ENCODE measurements at regions of chr4 and their contacts with region 1.

Region 1: GRCh38 chr4:39697740-39698423 is at the start of gene UBE2K:
- DNase-seq: peak; percentile 91 to 95
- ATAC-seq: peak; percentile 94 to 98 (median 96)
- H3K4me3 ChIP-seq: peak within 1 kb of the TSS; percentile 85
- H3K27ac ChIP-seq: peak within 1 kb of the TSS; percentile 90
- H3K4me1 ChIP-seq: peaks cover 23% of the 10 kb centered on the region
- H3K27me3 ChIP-seq: no peaks in the 10 kb centered on the region
- CTCF ChIP-seq: no peak
- total RNA-seq, gene UBE2K: 45.9 to 75.9 (median 61.5) TPM

Region 2: DNA sequence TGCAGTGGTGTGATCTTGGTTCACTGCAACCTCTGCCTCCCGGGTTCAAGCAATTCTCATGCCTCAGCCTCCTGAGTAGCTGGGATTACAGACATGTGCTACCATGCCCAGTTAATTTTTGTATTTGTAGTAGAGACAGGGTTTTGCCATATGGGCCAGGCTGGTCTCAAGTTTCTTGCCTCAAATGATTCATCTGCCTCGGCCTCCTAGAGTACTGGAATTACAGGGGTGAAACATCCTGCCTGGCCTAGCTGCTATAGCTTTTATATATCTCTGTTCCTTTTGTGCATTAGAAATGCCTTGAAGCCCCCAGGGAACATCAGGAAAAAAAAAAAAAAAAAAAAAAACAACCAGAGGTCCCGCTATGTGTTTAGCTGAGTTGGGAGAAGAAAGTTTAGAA is 34.8 kb after region 1 on chr4:
- intact Hi-C with region 1: loop called in 1 of 2 experiments (anchors 5 kb)
- DNase-seq: no peak
- ATAC-seq: peak; percentile 89 to 96 (median 96)
- H3K4me3 ChIP-seq: no peak overlapping the region
- H3K27ac ChIP-seq: peak overlapping the region; percentile 54
- H3K4me1 ChIP-seq: peaks cover 21% of the 10 kb centered on the region
- H3K27me3 ChIP-seq: no peaks in the 10 kb centered on the region
- CTCF ChIP-seq: no peak

Region 3: DNA sequence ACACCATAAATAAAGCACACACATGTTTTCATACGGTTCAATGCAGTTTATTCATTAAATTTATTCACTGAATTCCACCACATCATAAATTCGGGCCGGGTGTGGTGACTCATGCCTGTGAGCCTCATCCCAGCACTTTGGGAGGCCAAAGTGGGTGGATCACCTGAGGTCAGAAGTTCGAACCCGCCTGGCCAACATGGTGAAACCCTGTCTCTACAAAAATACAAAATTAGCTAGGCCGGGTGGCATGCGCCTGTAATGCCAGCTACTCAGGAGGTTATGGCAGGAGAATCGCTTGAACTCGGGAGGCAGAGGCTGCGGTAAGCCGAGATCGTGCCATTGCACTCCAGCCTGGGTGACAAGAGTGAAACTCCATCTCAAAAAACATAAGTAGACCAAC is 148.2 kb after region 1 on chr4:
- intact Hi-C with region 1: loop called (anchors 10 kb)
- DNase-seq: peak in 1 of 2 donors; percentile 58
- ATAC-seq: peak; percentile 59 to 93 (median 84)
- H3K4me3 ChIP-seq: no peak overlapping the region
- H3K27ac ChIP-seq: no peak overlapping the region
- H3K4me1 ChIP-seq: peaks cover 3% of the 10 kb centered on the region
- H3K27me3 ChIP-seq: no peaks in the 10 kb centered on the region
- CTCF ChIP-seq: no peak

Region 4: GRCh38 chr4:39855909-39856512 is 158.1 kb after region 1 on chr4:
- intact Hi-C with region 1: loop called in 1 of 2 experiments (anchors 10 kb)
- DNase-seq: no peak
- ATAC-seq: no peak
- H3K4me3 ChIP-seq: no peak overlapping the region
- H3K27ac ChIP-seq: no peak overlapping the region
- H3K4me1 ChIP-seq: no peaks in the 10 kb centered on the region
- H3K27me3 ChIP-seq: no peaks in the 10 kb centered on the region
- CTCF ChIP-seq: no peak